CD4-positive, alpha-beta memory T cell (primary cell): ENCODE measurements at regions of chr5 and their contacts with region 1.

Region 1: DNA sequence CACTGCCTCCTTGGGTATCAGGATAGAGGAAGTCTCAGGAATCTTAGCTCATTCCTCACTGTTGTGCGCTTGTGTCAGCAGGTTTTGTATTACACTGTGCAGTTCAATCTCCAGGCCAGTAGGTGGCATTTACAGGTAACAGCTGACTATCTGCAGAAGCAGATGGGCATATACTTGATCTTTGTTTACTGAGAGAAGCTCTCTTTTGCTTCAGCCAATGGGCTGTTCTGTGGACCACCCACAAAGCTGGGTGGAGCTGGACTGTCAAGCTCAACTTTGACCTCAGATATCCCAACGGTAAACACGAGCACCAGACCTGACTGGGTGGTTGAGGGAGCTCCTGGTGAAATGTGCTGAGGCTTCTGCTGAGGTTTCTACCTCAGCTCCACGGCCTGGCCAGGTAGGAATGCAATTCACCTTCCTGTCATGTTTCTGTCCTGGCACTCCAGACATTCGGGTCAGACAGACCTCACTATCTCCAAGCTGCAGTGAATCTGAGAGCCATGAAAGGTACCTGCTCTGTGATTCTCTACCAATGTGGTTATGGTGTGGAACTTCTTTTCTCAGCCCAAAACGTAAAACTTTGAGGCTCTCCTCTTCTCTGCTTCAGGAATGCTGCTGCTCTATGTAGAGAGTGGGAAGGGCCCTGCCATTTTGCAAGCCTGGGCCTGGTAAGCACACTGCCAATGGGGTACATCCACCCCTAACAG is 167.9 kb upstream of the ACTBL2 start:
- DNase-seq: peak in 4 of 5 donors; percentile 2 to 29 (median 10)
- H3K4me3 ChIP-seq: no peak overlapping the region
- H3K4me3 Mint-ChIP-seq: no peak overlapping the region
- H3K27ac ChIP-seq: no peak overlapping the region
- H3K27ac Mint-ChIP-seq: no peak overlapping the region
- H3K4me1 ChIP-seq: no peaks in the 10 kb centered on the region
- H3K4me1 Mint-ChIP-seq: no peaks in the 10 kb centered on the region
- H3K27me3 ChIP-seq: no peaks in the 10 kb centered on the region
- H3K27me3 Mint-ChIP-seq: peaks cover 7 to 10% of the 10 kb centered on the region in 2 donors

Region 2: GRCh38 chr5:56698463-56699381 is 951.8 kb before region 1 on chr5:
- CTCF ChIA-PET with region 1: no interaction called
- POLR2A ChIA-PET with region 1: no interaction called
- intact Hi-C with region 1: no loop called
- DNase-seq: peak in 2 of 5 donors; percentile 37
- H3K4me3 ChIP-seq: no peak overlapping the region
- H3K4me3 Mint-ChIP-seq: peak overlapping the region in 7 of 8 donors; percentile 14 to 80 (median 66)
- H3K27ac ChIP-seq: no peak overlapping the region
- H3K27ac Mint-ChIP-seq: peak overlapping the region; percentile 78 to 93 (median 89)
- H3K4me1 ChIP-seq: peaks cover 90% of the 10 kb centered on the region
- H3K4me1 Mint-ChIP-seq: peaks cover 61 to 97% (median 82%) of the 10 kb centered on the region in 4 donors
- H3K27me3 ChIP-seq: no peaks in the 10 kb centered on the region
- H3K27me3 Mint-ChIP-seq: no peaks in the 10 kb centered on the region

Region 3: GRCh38 chr5:57499262-57500050 is 151.1 kb before region 1 on chr5:
- CTCF ChIA-PET with region 1: interaction called, 11 read pairs
- POLR2A ChIA-PET with region 1: no interaction called
- intact Hi-C with region 1: no loop called
- DNase-seq: peak in 4 of 5 donors; percentile 15 to 34 (median 32)
- H3K4me3 ChIP-seq: no peak overlapping the region
- H3K4me3 Mint-ChIP-seq: peak overlapping the region; percentile 63 to 82 (median 74)
- H3K27ac ChIP-seq: no peak overlapping the region
- H3K27ac Mint-ChIP-seq: peak overlapping the region in 5 of 7 donors; percentile 0 to 79 (median 49)
- H3K4me1 ChIP-seq: peaks cover 27% of the 10 kb centered on the region
- H3K4me1 Mint-ChIP-seq: peaks cover 15 to 31% (median 16%) of the 10 kb centered on the region in 4 donors
- H3K27me3 ChIP-seq: no peaks in the 10 kb centered on the region
- H3K27me3 Mint-ChIP-seq: peaks cover 0 to 2% of the 10 kb centered on the region in 2 donors

Region 4: GRCh38 chr5:57632937-57633336 is 17.6 kb before region 1 on chr5:
- CTCF ChIA-PET with region 1: interaction called, 11 read pairs
- POLR2A ChIA-PET with region 1: no interaction called
- intact Hi-C with region 1: no loop called
- DNase-seq: no peak
- H3K4me3 ChIP-seq: no peak overlapping the region
- H3K4me3 Mint-ChIP-seq: no peak overlapping the region
- H3K27ac ChIP-seq: no peak overlapping the region
- H3K27ac Mint-ChIP-seq: no peak overlapping the region
- H3K4me1 ChIP-seq: no peaks in the 10 kb centered on the region
- H3K4me1 Mint-ChIP-seq: no peaks in the 10 kb centered on the region
- H3K27me3 ChIP-seq: no peaks in the 10 kb centered on the region
- H3K27me3 Mint-ChIP-seq: peaks cover 0 to 8% of the 10 kb centered on the region in 2 donors

Region 5: GRCh38 chr5:57662991-57663390 is 12.5 kb after region 1 on chr5:
- CTCF ChIA-PET with region 1: interaction called, 12 read pairs
- POLR2A ChIA-PET with region 1: no interaction called
- intact Hi-C with region 1: no loop called
- DNase-seq: no peak
- H3K4me3 ChIP-seq: no peak overlapping the region
- H3K4me3 Mint-ChIP-seq: no peak overlapping the region
- H3K27ac ChIP-seq: no peak overlapping the region
- H3K27ac Mint-ChIP-seq: no peak overlapping the region
- H3K4me1 ChIP-seq: no peaks in the 10 kb centered on the region
- H3K4me1 Mint-ChIP-seq: no peaks in the 10 kb centered on the region
- H3K27me3 ChIP-seq: no peaks in the 10 kb centered on the region
- H3K27me3 Mint-ChIP-seq: peaks cover 2 to 6% of the 10 kb centered on the region in 2 donors